Endothelial cell of umbilical vein (primary cell): ENCODE measurements at regions of chr16 and their contacts with region 1.

Region 1: GRCh38 chr16:28924732-28925385 is at the start of gene RABEP2:
- DNase-seq: peak; percentile 91
- H3K4me3 ChIP-seq: peak within 1 kb of the TSS; percentile 59 to 74 (median 70)
- H3K27ac ChIP-seq: peak within 1 kb of the TSS; percentile 87
- H3K4me1 ChIP-seq: no peaks in the 10 kb centered on the region
- H3K27me3 ChIP-seq: no peaks in the 10 kb centered on the region
- CTCF ChIP-seq: no peak
- POLR2A ChIP-seq: peak; percentile 2
- total RNA-seq, gene RABEP2: 36.0 and 37.4 TPM in 2 replicates

Region 2: GRCh38 chr16:28823872-28824716 is 100.8 kb before region 1 on chr16:
- CTCF ChIA-PET with region 1: no interaction called
- POLR2A ChIA-PET with region 1: no interaction called
- dilution Hi-C with region 1: no loop called
- intact Hi-C with region 1: loop called (anchors 1 kb)
- DNase-seq: peak; percentile 99
- H3K4me3 ChIP-seq: peak overlapping the region; percentile 38 to 93 (median 77)
- H3K27ac ChIP-seq: peak overlapping the region; percentile 67
- H3K4me1 ChIP-seq: peaks cover 16% of the 10 kb centered on the region
- H3K27me3 ChIP-seq: no peaks in the 10 kb centered on the region
- CTCF ChIP-seq: peak in 1 of 2 donors; percentile 28
- POLR2A ChIP-seq: peak; percentile 75

Region 3: DNA sequence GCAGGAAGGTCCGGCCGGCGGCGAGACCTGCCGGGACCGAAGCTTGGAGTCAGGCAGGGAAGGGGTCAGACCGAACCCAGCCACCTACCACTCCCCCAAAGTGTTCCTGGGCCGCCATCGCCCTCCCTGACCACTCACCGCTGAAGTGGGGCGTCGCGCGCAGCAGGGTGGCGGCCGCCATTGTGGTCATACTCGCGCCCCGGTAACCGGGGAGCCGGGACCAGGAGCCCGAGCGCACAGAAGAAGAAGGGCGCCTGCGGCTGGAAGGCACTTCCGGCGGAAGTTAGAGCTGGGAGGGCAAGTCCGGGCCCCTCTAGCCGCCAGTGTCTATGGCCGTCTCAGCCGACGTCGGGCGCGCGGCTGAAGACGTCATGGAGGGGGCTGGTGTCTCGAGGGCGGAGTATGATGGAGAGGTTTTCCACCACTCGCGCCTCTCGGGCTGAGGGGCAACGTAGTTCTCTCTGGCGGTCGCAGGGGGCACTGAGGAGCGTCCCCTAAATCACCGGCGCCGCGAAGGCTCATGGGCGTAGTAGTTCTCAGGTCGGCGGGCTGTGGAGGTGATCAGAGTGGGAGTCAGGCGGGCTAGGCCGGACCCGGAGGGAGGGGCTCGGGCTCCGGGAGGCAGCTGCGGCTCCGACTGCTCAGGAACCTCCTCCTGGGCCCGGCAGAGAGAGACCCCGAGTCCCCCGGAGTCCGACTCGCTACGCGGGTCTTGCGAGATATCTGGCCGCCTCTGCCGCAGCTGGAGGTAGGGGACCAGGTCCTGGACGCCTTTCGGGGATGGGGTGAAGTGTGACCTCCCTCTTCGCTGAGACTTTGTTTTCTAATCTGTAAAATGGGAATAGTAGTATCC is 78.6 kb before region 1 on chr16 and contains the start of gene TUFM:
- CTCF ChIA-PET with region 1: no interaction called
- POLR2A ChIA-PET with region 1: no interaction called
- dilution Hi-C with region 1: no loop called
- intact Hi-C with region 1: loop called (anchors 1 kb)
- DNase-seq: peak; percentile 99
- H3K4me3 ChIP-seq: peak within 1 kb of the TSS; percentile 54 to 84 (median 67)
- H3K27ac ChIP-seq: peak within 1 kb of the TSS; percentile 42
- H3K4me1 ChIP-seq: peaks cover 13% of the 10 kb centered on the region
- H3K27me3 ChIP-seq: no peaks in the 10 kb centered on the region
- CTCF ChIP-seq: peak; percentile 70 to 83
- POLR2A ChIP-seq: peak; percentile 87
- total RNA-seq, gene TUFM: 186 and 190 TPM in 2 replicates

Region 4: DNA sequence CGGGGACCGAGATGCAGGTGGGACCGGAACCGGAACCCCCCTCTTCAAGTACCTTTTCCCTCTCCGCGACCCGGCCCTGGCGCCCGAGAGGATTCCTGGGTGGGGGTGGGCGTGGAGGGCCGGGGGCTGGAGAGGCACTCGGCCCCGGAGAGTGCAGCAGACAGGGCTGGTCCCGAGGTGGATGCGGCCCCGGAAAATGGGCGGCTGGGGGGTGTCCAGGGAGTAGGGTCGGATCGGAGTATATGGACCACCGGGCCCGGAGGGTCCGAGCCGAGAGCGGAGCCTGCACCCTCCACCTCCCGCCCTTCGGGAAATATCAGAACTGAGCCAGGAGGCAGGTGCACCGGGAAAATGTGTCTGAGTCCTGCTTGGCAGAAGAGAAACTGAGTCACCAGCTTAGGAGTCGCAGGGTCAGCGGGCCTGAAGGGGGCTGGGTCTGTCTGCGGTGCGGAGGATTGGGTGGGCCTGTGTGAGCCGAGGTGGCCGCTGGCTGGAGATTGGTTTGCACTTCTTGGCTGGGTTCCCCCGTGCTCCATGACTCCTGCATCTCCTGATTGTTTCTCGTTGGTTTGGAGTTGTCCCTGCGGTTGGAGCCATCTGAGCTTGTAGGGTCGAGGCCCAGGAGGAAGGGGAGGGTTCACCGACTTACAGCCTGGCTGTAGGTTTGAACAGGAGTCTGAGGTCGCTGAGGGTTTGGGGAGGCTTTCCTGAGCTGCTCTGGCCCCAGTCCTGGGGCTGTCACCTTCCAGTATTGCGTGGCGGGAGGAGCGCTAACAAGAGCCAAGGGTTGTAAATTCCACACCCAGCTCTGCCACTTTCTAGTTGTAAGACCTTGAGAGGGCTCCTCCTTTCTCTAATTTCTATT is 60.7 kb before region 1 on chr16:
- CTCF ChIA-PET with region 1: interaction called, 4 read pairs
- POLR2A ChIA-PET with region 1: no interaction called
- dilution Hi-C with region 1: no loop called
- intact Hi-C with region 1: loop called (anchors 2 kb)
- DNase-seq: peak; percentile 52
- H3K4me3 ChIP-seq: peak overlapping the region; percentile 46 to 90 (median 83)
- H3K27ac ChIP-seq: peak overlapping the region; percentile 96
- H3K4me1 ChIP-seq: peaks cover 8% of the 10 kb centered on the region
- H3K27me3 ChIP-seq: no peaks in the 10 kb centered on the region
- CTCF ChIP-seq: no peak
- POLR2A ChIP-seq: no peak

Region 5: DNA sequence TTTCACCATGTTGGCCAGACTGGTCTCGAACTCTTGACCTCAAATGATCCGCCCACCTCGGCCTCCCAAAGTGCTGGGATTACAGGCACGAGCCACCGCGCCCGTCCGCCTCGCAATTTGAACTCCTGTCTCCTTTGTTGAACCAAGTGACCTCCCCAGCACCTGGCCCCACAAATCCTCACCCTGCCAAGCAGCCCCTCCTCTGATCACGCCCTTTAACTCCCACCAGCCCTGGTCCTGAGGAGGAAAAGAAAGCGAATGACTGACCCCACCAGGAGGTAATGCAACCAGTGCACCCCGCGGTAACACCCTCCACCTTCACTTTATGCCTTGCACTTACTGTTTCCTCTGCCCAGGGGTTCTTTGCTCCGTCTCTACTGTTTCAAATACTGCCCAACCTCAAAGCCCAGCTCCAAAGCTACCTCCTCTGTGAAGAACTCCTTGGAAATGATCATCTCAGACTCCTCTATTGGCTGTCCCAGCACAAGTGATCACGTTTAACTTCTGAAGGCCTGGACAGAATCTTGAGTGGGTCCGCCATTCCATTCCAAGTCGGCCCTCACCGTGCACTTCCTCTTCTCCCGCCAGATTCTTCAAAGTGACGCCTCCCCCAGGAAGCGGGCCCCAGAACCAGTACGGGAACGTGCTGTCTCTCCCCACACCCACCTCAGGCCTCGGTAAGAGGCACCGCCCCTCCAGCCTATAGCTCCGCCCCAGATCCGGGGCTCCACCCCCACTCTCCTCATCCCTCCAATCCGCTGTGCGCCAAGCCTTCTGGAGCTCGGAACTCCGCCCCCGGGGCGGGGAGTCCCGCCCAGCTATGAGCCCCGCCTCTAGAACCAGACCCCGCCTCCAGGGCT is 11.3 kb after region 1 on chr16:
- CTCF ChIA-PET with region 1: interaction called, 6 read pairs
- POLR2A ChIA-PET with region 1: no interaction called
- dilution Hi-C with region 1: no loop called
- intact Hi-C with region 1: loop called (anchors 1 kb)
- DNase-seq: peak; percentile 85
- H3K4me3 ChIP-seq: peak overlapping the region in 1 of 3 experiments; percentile 12
- H3K27ac ChIP-seq: no peak overlapping the region
- H3K4me1 ChIP-seq: no peaks in the 10 kb centered on the region
- H3K27me3 ChIP-seq: no peaks in the 10 kb centered on the region
- CTCF ChIP-seq: no peak
- POLR2A ChIP-seq: no peak